ENCODE measurements at regions of chr15 and their contacts with region 1.

Region 1: DNA sequence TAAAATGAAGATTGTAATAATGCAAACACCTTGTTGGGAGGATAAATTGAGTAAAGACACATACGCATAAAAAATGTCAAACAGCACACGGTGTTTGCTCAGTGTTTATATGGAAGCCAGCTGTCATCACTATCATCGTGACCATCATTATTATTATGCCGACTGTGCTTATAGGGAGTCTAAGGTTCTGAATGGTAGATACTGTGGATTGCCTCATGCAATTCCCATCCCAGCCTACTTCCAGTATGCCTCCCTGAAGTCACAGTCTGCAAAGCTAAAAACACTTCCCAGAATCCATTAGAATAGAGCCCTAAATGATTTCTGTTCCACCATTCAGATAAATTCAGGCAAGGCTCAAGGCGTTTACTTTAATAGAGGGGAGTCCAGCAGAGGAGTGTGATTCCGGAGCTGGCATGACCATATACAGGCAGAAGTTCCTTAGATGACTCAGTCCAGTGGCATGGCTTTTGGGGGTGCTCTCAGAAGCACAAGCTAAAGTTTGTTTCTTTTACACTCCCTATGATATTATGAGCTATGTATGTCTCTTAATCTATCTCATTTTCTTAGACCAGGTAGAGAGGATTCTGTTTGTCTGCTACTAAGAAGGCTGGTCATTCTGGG is 148.7 kb downstream of the MEX3B start:
- DNase-seq: no peak
- H3K4me3 Mint-ChIP-seq: no peak overlapping the region
- H3K27ac Mint-ChIP-seq: no peak overlapping the region
- H3K4me1 Mint-ChIP-seq: no peaks in the 10 kb centered on the region
- H3K27me3 Mint-ChIP-seq: peaks cover 2% of the 10 kb centered on the region

Region 2: DNA sequence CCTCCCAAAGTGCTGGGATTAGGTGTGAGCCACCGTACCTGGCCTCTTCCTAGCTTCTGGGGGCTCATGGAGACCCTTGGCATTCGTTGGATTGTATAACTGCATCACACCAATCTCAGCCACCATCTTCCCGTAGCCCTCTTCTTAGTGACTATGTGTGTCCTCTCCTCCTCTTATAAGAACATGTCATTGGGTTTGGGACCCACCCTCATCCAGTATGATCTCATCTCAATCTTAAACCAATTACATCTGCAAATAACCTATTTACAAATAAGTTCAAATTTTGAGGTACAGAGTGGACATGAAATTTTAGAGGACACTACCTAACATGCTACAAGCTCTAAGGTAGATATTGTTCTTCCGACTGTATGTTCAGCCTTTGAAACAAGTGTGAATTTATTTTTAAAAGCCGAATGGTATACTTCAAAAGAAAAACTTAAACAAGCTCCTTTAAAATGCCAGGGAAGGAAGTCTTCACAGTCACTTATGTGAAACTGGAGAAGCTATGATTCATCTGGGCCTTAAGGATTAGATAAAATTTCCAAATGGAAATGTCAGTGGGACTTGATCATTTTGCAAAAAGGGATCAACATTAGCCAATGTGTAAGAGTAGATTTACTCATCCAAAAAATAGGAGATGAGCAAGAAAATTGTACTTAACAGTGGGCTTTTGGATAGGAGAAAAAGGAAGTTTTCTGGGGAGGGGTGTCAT is 77.1 kb before region 1 on chr15:
- intact Hi-C with region 1: loop called (anchors 2 kb)
- DNase-seq: no peak
- H3K4me3 Mint-ChIP-seq: no peak overlapping the region
- H3K27ac Mint-ChIP-seq: no peak overlapping the region
- H3K4me1 Mint-ChIP-seq: no peaks in the 10 kb centered on the region
- H3K27me3 Mint-ChIP-seq: no peaks in the 10 kb centered on the region